ENCODE measurements at regions of chr17 and their contacts with region 1.

Region 1: DNA sequence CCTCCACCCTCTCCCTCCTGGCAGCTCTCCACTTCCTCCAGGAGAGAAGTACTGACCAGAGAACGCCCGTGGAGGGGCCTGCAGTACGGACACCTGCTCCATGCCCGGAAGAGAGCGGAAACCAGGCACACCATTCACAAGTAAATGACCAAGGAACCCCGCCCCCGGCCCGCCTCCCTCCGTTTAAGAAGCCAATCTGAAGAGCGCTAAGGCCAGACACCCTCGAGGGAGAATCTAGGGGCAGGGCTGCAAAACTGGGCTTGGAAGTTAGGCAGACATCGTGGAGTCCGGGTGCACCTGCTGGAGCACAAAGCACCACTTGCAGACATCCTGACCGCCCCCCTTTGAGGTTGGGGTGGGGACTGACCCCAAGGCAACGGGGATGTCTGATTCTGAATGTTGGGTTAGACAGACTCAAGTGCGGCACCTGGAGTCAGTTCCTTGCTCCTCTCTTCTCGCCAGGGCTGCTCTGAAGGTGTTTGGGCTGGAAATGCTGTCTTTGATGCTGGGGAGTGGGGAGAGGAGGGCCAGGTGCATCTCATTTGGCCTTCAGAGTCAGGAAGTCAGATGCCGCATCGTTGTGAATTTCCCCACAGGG is 964 bp upstream of the FAAP100 start:
- DNase-seq: peak; percentile 67
- H3K4me3 Mint-ChIP-seq: peak overlapping the region; percentile 92
- H3K27ac Mint-ChIP-seq: peak overlapping the region; percentile 91
- H3K4me1 Mint-ChIP-seq: peaks cover 41% of the 10 kb centered on the region
- H3K27me3 Mint-ChIP-seq: no peaks in the 10 kb centered on the region

Region 2: GRCh38 chr17:81119223-81120148 is 433.6 kb before region 1 on chr17:
- intact Hi-C with region 1: loop called (anchors 1 kb)
- DNase-seq: peak; percentile 88
- H3K4me3 Mint-ChIP-seq: peak overlapping the region; percentile 72
- H3K27ac Mint-ChIP-seq: peak overlapping the region; percentile 84
- H3K4me1 Mint-ChIP-seq: no peaks in the 10 kb centered on the region
- H3K27me3 Mint-ChIP-seq: no peaks in the 10 kb centered on the region

Region 3: DNA sequence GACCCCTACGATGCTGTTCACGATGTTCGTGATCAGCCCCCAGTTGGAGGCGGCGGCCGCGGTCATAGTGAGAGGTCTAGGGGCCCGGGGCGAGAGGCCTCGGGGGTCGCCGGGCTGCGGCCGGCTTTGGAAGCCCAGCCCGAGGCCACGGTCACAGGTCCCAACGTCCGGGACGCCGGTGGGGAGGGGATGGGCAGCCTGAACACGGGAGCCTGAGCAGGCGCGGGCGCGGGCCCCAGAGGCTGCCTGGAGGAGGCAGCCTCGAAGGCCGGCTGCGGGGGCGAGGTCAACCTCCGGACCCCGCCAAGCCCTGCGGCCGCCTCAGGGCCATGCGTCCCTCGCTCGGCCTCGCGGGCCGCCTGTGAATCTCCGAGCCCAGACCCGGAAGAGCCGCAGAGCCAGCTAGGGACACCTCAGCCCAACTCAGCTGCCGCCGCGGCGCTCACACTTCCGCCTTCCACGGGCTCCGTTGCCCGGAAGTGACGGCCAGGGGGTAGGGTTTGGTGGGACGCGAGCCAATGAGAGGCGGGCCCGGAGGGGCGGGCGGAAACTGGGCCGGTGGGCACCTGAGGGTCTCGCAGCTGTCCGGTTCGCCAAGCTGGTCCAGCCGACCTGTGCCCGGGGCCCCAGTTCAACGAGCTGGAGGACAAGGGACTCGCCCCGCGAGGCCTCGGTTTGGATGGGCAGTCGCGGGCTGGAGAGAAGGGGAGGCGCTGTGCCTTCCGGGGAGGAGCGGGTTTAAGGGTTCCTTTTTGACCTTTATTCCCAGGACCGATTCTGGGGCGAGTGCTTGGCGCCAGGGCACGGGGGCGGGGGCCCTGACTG is 258.0 kb before region 1 on chr17 and contains the start of gene SLC38A10:
- intact Hi-C with region 1: loop called (anchors 2 kb)
- DNase-seq: peak; percentile 92
- H3K4me3 Mint-ChIP-seq: peak within 1 kb of the TSS; percentile 92
- H3K27ac Mint-ChIP-seq: peak within 1 kb of the TSS; percentile 90
- H3K4me1 Mint-ChIP-seq: peaks cover 27% of the 10 kb centered on the region
- H3K27me3 Mint-ChIP-seq: no peaks in the 10 kb centered on the region
- total RNA-seq, gene SLC38A10: 99.7 and 101 TPM in 2 replicates

Region 4: GRCh38 chr17:81636505-81637288 is 83.6 kb after region 1 on chr17 and contains the starts of genes NPLOC4 and TSPAN10:
- intact Hi-C with region 1: loop called (anchors 2 kb)
- DNase-seq: peak; percentile 81
- H3K4me3 Mint-ChIP-seq: peak within 1 kb of the TSS; percentile 92
- H3K27ac Mint-ChIP-seq: peak within 1 kb of the TSS; percentile 80
- H3K4me1 Mint-ChIP-seq: peaks cover 16% of the 10 kb centered on the region
- H3K27me3 Mint-ChIP-seq: peaks cover 5% of the 10 kb centered on the region
- total RNA-seq, gene NPLOC4: 138 and 157 TPM in 2 replicates
- total RNA-seq, gene TSPAN10: 0.21 and 0.66 TPM in 2 replicates

Region 5: GRCh38 chr17:81702971-81703746 is 150.0 kb after region 1 on chr17 and contains the start of gene MRPL12:
- intact Hi-C with region 1: loop called (anchors 2 kb)
- DNase-seq: peak; percentile 87
- H3K4me3 Mint-ChIP-seq: peak within 1 kb of the TSS; percentile 98
- H3K27ac Mint-ChIP-seq: peak within 1 kb of the TSS; percentile 97
- H3K4me1 Mint-ChIP-seq: peaks cover 18% of the 10 kb centered on the region
- H3K27me3 Mint-ChIP-seq: no peaks in the 10 kb centered on the region
- total RNA-seq, gene MRPL12: 232 TPM in 2 replicates